ENCODE measurements at regions of chr1 and their contacts with region 1.

Region 1: GRCh38 chr1:40774266-40774998 is 9.2 kb upstream of the KCNQ4 start:
- DNase-seq: no peak
- ATAC-seq: peak; percentile 88
- H3K4me3 ChIP-seq: no peak overlapping the region
- H3K27ac ChIP-seq: no peak overlapping the region
- H3K4me1 ChIP-seq: no peaks in the 10 kb centered on the region
- H3K27me3 ChIP-seq: no peaks in the 10 kb centered on the region
- CTCF ChIP-seq: peak; percentile 79 to 91 (median 86)
- EP300 ChIP-seq: no peak
- POLR2A ChIP-seq: no peak
- RAD21 ChIP-seq: peak; percentile 65

Region 2: GRCh38 chr1:40531381-40532061 is 242.9 kb before region 1 on chr1 and contains the start of gene ZNF684:
- CTCF ChIA-PET with region 1: interaction called, 11 read pairs
- POLR2A ChIA-PET with region 1: no interaction called
- RAD21 ChIA-PET with region 1: interaction called, 7 read pairs
- SMC1A ChIA-PET with region 1: interaction called, 3 read pairs
- in situ Hi-C with region 1: no loop called
- intact Hi-C with region 1: no loop called
- DNase-seq: peak; percentile 89
- ATAC-seq: peak; percentile 97
- H3K4me3 ChIP-seq: peak within 1 kb of the TSS; percentile 71
- H3K27ac ChIP-seq: peak within 1 kb of the TSS; percentile 77
- H3K4me1 ChIP-seq: peaks cover 6% of the 10 kb centered on the region
- H3K27me3 ChIP-seq: no peaks in the 10 kb centered on the region
- CTCF ChIP-seq: no peak
- EP300 ChIP-seq: no peak
- POLR2A ChIP-seq: peak; percentile 80
- RAD21 ChIP-seq: no peak
- polyA plus RNA-seq, gene ZNF684: 5.9 to 6.2 TPM

Region 3: GRCh38 chr1:40722636-40723035 is 51.8 kb before region 1 on chr1:
- CTCF ChIA-PET with region 1: interaction called, 10 read pairs
- POLR2A ChIA-PET with region 1: no interaction called
- RAD21 ChIA-PET with region 1: interaction called, 3 read pairs
- SMC1A ChIA-PET with region 1: interaction called, 6 read pairs
- in situ Hi-C with region 1: no loop called
- intact Hi-C with region 1: no loop called
- DNase-seq: no peak
- ATAC-seq: peak; percentile 39; the same call in 1 of the 3 replicates
- H3K4me3 ChIP-seq: no peak overlapping the region
- H3K27ac ChIP-seq: no peak overlapping the region
- H3K4me1 ChIP-seq: no peaks in the 10 kb centered on the region
- H3K27me3 ChIP-seq: no peaks in the 10 kb centered on the region
- CTCF ChIP-seq: peak in 2 of 3 experiments; percentile 12 to 32; a peak in 1 of 6 replicates
- EP300 ChIP-seq: no peak
- POLR2A ChIP-seq: no peak
- RAD21 ChIP-seq: peak; percentile 55

Region 4: GRCh38 chr1:40763742-40764532 is 10.5 kb before region 1 on chr1:
- CTCF ChIA-PET with region 1: interaction called, 84 read pairs
- POLR2A ChIA-PET with region 1: no interaction called
- RAD21 ChIA-PET with region 1: interaction called, 24 read pairs
- SMC1A ChIA-PET with region 1: interaction called, 39 read pairs
- in situ Hi-C with region 1: no loop called
- intact Hi-C with region 1: no loop called
- DNase-seq: peak; percentile 62
- ATAC-seq: peak; percentile 76
- H3K4me3 ChIP-seq: peak overlapping the region; percentile 53
- H3K27ac ChIP-seq: peak overlapping the region; percentile 85
- H3K4me1 ChIP-seq: peaks cover 42% of the 10 kb centered on the region
- H3K27me3 ChIP-seq: no peaks in the 10 kb centered on the region
- CTCF ChIP-seq: no peak
- EP300 ChIP-seq: peak; percentile 48 to 54; a peak in 1 of 4 replicates
- POLR2A ChIP-seq: no peak
- RAD21 ChIP-seq: no peak

Region 5: DNA sequence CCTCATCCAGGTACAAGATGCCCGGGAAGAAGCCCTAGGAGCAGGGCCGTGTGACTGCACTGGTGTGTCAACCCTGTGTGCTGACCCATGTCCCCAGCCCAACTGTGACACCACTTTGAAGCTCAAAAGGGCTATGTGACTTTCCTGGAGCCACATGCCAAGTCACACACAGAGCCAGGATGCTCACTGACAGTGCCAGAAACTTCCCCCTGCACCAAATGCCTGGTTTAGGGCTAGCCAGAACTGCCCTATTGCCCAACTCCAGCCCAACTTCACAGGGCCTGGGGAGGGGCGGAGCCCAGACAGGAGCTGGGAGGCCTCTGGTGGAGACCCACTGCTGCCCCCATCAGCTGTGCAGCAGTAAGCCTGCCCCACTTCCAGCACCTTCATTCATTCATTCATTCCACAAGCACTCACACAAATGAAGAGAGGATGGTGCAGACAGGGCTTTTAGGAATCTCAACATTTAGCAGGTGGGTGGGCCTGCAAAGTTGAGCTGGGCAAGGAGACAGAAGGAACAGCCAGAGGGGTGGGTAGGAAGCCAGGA is 45.9 kb after region 1 on chr1:
- CTCF ChIA-PET with region 1: interaction called, 14 read pairs
- POLR2A ChIA-PET with region 1: no interaction called
- RAD21 ChIA-PET with region 1: interaction called, 4 read pairs
- SMC1A ChIA-PET with region 1: interaction called, 5 read pairs
- in situ Hi-C with region 1: no loop called
- intact Hi-C with region 1: no loop called
- DNase-seq: no peak
- ATAC-seq: no peak
- H3K4me3 ChIP-seq: no peak overlapping the region
- H3K27ac ChIP-seq: no peak overlapping the region
- H3K4me1 ChIP-seq: peaks cover 10% of the 10 kb centered on the region
- H3K27me3 ChIP-seq: no peaks in the 10 kb centered on the region; a peak in 1 of 4 replicates
- CTCF ChIP-seq: no peak
- EP300 ChIP-seq: no peak
- POLR2A ChIP-seq: no peak
- RAD21 ChIP-seq: no peak

Region 6: DNA sequence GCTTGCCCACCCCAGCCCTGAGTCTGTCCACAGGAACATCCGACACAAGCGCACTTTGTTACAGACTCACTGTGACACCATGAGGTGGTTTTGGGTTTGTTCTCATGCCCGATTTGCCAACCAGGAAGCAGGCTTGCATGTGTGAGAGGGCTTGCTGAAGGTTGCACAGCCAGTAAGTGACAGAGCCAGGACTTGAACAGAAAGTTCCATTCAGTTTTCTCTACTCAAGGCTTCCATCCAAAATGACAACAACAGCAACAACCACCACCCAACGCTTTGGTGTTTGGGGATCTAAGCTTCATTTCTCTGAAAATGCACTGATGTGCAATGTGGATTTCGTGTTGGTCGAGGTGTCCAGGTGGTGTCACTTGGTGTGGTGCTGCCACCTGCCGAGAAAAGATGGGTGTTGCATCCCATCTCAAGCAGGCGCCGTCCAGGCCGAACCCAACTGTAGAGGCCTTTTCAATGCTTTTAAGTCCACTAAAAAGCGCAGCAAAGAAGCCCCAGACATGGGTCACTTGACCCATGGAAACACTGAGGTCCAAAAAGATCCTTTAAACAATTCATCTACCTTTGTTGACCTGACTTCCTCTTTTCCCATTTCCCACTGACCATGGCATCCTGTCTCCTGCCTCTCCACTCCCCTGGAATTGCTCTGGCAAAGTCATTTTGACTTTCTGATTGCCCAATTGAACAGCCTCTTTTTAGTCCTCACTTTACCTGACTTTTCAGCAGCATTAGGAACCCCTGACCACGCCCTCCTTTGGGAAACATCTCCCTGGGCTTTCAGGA is 75.6 kb after region 1 on chr1:
- CTCF ChIA-PET with region 1: interaction called, 254 read pairs
- POLR2A ChIA-PET with region 1: interaction called, 5 read pairs
- RAD21 ChIA-PET with region 1: interaction called, 86 read pairs
- SMC1A ChIA-PET with region 1: interaction called, 111 read pairs
- in situ Hi-C with region 1: no loop called
- intact Hi-C with region 1: loop called (anchors 1 kb)
- DNase-seq: peak; percentile 62
- ATAC-seq: peak; percentile 92
- H3K4me3 ChIP-seq: no peak overlapping the region
- H3K27ac ChIP-seq: no peak overlapping the region
- H3K4me1 ChIP-seq: peaks cover 12% of the 10 kb centered on the region
- H3K27me3 ChIP-seq: no peaks in the 10 kb centered on the region; a peak in 1 of 4 replicates
- CTCF ChIP-seq: peak; percentile 82 to 94 (median 86)
- EP300 ChIP-seq: no peak
- POLR2A ChIP-seq: no peak
- RAD21 ChIP-seq: peak; percentile 91

Region 7: DNA sequence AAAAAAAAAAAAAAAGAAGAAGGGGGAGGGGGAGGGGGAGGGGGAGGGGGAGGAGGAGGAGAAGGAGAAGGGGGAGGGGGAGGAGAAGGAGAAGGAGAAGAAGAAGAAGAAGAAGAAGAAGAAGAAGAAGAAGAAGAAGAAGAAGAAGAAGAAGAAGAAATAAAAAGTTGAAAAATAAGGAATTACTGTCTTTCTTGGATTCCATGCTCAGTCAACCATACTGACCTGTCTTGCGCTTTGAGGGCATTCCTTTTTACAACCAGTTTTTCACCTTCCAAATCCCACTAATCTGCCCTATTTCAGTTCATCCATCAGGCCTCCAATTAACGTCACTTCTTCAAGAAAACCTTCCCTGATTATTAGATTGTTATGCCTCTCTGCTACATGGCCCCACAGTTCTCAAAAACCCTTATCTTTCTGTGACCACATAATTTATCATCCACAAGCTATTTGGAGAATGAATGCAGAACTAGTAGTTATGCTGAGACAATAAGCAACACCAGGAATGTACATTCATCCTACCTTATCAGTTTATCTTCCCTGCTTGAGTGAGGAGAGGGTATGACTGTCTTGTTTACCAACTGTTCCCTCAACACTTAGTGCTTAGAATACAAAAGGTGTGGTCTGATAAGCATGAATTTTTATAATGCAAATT is 1447.6 kb after region 1 on chr1:
- CTCF ChIA-PET with region 1: no interaction called
- POLR2A ChIA-PET with region 1: no interaction called
- RAD21 ChIA-PET with region 1: no interaction called
- SMC1A ChIA-PET with region 1: no interaction called
- in situ Hi-C with region 1: no loop called
- intact Hi-C with region 1: no loop called
- DNase-seq: no peak
- ATAC-seq: no peak
- H3K4me3 ChIP-seq: no peak overlapping the region
- H3K27ac ChIP-seq: no peak overlapping the region
- H3K4me1 ChIP-seq: no peaks in the 10 kb centered on the region
- H3K27me3 ChIP-seq: no peaks in the 10 kb centered on the region
- CTCF ChIP-seq: no peak
- EP300 ChIP-seq: no peak
- POLR2A ChIP-seq: no peak
- RAD21 ChIP-seq: no peak

Measured in GM12878 (cell line).